ENCODE measurements at regions of chr10 and their contacts with region 1.

Region 1: DNA sequence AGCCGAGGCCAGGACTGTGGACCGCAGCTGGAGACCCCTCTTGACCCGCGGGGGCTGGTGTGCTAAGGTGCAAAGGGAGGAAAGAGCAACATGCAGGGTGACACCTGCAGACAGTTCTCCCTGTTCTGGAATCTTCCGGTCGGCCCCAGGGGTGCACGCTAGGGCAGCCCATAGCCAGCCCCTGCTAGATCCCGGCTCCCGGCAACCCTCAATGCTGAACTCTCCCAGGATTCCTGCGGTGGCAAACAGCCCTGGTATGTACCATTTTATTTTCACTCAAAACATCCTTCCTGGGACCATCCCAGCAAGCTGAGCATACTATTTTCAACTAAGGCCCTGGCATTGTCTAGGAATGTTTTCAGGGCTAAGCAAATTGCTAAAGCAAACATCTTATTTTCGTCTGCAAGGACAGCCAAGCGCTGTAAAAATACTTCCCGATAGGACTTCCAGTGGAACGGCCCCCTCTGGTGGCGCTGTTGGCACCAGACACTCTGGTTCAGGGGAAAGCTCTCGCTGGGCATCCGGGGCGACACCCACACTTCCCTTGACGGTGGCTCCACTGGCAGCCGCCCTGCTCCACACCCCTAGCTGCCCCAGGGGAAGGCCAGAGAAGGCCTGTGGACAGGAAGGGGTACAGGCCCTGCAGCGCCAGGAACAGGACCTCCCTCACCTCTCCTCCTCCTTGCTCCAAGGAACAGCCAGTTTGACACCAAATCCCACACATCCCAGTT is 99.4 kb downstream of the CTBP2 start:
- DNase-seq: peak; percentile 62 to 77
- H3K4me3 ChIP-seq: no peak overlapping the region
- H3K4me3 Mint-ChIP-seq: no peak overlapping the region
- H3K27ac Mint-ChIP-seq: peak overlapping the region; percentile 44
- H3K4me1 ChIP-seq: peaks cover 32% of the 10 kb centered on the region
- H3K4me1 Mint-ChIP-seq: peaks cover 20% of the 10 kb centered on the region
- H3K27me3 ChIP-seq: no peaks in the 10 kb centered on the region
- H3K27me3 Mint-ChIP-seq: no peaks in the 10 kb centered on the region
- CTCF ChIP-seq: peak; percentile 80

Region 2: DNA sequence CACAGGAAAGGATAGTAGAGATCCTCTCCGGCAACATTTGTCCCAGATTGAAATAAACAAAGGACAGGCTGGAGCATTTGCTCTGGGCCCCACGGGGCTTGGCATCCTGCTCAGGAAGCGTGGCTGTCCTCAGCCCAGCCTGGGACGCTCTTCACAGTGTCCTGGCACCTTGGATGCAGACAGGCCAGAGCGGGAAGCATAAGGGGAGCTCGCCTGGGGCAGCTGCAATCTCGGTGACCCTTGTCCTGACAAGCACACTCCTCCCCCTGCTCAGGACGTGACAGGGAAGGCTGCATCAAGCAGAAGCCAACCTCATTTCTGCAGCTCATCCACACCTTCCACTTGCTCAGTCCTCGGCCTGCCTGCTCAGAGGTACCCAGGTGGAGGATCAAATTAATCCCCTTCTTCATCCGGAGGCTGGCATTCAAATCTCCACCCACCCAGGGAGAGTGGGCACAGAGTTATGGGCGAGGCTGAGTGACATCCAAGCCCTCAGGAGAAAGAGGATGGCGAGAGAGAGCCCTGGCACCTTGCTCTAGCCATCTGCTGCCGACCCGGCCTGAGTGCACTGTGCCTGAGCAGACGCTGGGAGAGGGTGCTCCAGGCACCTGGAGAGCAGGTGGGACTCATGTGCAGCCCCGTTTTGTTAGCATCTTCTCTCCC is 211.7 kb before region 1 on chr10:
- CTCF ChIA-PET with region 1: no interaction called
- POLR2A ChIA-PET with region 1: no interaction called
- intact Hi-C with region 1: no loop called
- DNase-seq: peak in 1 of 2 experiments; percentile 19
- H3K4me3 ChIP-seq: no peak overlapping the region
- H3K4me3 Mint-ChIP-seq: no peak overlapping the region
- H3K27ac Mint-ChIP-seq: no peak overlapping the region
- H3K4me1 ChIP-seq: 0 out of 2 replicates have a peak, but pooled peaks cover 7% of the 10 kb centered on the region
- H3K4me1 Mint-ChIP-seq: no peaks in the 10 kb centered on the region
- H3K27me3 ChIP-seq: no peaks in the 10 kb centered on the region
- H3K27me3 Mint-ChIP-seq: no peaks in the 10 kb centered on the region
- CTCF ChIP-seq: no peak

Region 3: DNA sequence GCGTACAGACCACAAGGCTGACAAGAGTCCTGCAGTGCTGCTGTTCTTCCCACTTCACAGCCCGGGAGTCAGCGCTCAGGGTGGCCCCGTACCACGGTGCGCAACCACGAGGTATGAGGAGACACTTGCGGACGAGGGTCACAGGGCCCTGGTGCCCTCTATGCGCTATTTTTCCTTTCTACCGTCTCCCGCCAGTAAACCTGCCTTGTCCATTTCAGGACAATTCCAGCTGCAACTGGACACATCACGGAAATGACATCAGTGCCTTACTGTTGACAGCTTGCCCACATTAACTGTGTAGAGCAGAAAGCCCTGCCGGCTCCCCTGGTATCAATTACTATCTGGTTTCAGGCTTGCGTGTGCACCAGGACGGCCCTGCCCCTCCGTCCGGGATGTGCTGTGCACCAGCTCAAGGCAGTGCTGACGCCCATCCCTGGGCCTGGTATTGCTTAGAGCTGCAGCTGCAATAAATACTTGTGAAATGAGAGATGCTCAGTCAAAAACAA is 54.0 kb before region 1 on chr10:
- CTCF ChIA-PET with region 1: interaction called, 3 read pairs
- POLR2A ChIA-PET with region 1: no interaction called
- intact Hi-C with region 1: loop called (anchors 5 kb)
- DNase-seq: no peak
- H3K4me3 ChIP-seq: no peak overlapping the region
- H3K4me3 Mint-ChIP-seq: no peak overlapping the region
- H3K27ac Mint-ChIP-seq: no peak overlapping the region
- H3K4me1 ChIP-seq: no peaks in the 10 kb centered on the region
- H3K4me1 Mint-ChIP-seq: no peaks in the 10 kb centered on the region
- H3K27me3 ChIP-seq: no peaks in the 10 kb centered on the region
- H3K27me3 Mint-ChIP-seq: no peaks in the 10 kb centered on the region
- CTCF ChIP-seq: no peak

Region 4: DNA sequence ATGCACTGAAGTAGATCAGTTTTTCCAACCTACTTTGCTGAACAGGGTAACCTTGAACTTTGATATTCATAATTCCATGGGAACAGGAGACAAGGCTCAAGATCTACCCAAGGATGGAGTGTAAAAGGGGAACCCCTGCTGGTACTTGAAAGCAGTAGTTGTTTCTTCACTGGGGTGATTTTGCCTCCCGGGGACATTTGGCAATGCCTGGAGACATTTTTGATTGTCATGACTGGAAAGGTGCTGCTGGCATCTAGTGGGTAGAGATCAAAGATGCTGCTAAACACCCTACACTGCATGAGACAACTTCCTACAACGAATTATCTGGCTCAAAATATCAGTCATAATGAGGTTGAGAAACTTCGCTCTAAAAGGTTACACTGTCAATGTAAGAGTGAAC is 314.2 kb after region 1 on chr10:
- CTCF ChIA-PET with region 1: no interaction called
- POLR2A ChIA-PET with region 1: no interaction called
- intact Hi-C with region 1: loop called (anchors 1 kb)
- DNase-seq: peak; percentile 32 to 37
- H3K4me3 ChIP-seq: no peak overlapping the region
- H3K4me3 Mint-ChIP-seq: no peak overlapping the region
- H3K27ac Mint-ChIP-seq: no peak overlapping the region
- H3K4me1 ChIP-seq: no peaks in the 10 kb centered on the region
- H3K4me1 Mint-ChIP-seq: no peaks in the 10 kb centered on the region
- H3K27me3 ChIP-seq: no peaks in the 10 kb centered on the region; the same call in 1 of the 2 replicates
- H3K27me3 Mint-ChIP-seq: peaks cover 4% of the 10 kb centered on the region
- CTCF ChIP-seq: peak; percentile 21 to 47

Measured in Caco-2 (cell line).